ENCODE measurements at regions of chr14 and their contacts with region 1.

Region 1: GRCh38 chr14:69673578-69674305 is 62.3 kb downstream of the SUSD6 start:
- DNase-seq: no peak
- ATAC-seq: peak; percentile 46
- H3K4me3 ChIP-seq: no peak overlapping the region
- H3K27ac ChIP-seq: peak overlapping the region; percentile 77
- H3K4me1 ChIP-seq: peaks cover 72% of the 10 kb centered on the region
- H3K27me3 ChIP-seq: no peaks in the 10 kb centered on the region
- CTCF ChIP-seq: peak in 2 of 3 experiments; percentile 15 to 16; a peak in 2 of 6 replicates
- EP300 ChIP-seq: no peak
- POLR2A ChIP-seq: no peak
- RAD21 ChIP-seq: peak; percentile 25; the same call in 1 of the 2 replicates

Region 2: DNA sequence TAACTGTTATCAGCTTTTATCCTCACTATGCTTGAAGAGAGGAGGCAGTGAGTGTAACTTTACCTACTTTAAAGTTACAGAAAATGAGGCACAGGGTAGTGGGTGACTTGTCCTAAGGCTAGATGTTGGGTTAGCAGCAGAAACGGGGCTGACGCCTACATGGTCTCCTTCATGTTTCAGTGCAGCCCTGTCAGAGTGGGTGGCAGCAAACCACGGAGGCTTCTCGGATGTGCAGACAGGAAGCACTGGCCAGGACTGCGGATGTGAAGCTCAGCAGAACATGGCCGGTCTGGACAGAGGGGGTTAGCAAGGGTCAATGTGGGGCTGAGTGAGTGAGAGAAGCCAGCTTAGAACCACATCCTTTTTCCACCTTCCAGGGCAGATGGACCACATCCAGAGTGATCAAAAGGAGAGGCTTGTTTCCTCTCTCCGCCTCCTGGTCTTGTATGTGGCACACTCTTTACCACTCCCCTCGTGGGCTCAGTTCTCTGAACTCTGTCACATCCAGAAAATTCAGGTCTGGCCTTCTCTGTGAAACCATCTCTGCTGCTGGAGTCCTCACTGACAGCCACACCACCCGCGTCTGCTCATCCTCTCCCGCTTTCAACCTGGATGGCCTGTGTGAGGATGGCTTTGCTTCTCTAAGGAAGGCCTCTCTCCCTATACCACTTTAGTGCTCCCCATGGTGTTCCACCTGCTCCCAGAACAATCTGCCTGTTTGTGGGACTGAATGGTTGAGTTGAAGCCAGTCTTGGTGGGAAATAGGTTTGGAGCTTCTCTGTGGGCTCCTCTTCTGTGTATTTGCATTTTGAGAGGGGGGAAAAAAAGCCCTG is 48.2 kb before region 1 on chr14:
- CTCF ChIA-PET with region 1: interaction called, 10 read pairs
- POLR2A ChIA-PET with region 1: interaction called, 5 read pairs
- RAD21 ChIA-PET with region 1: interaction called, 7 read pairs
- SMC1A ChIA-PET with region 1: interaction called, 30 read pairs
- in situ Hi-C with region 1: no loop called
- intact Hi-C with region 1: no loop called
- DNase-seq: peak; percentile 88
- ATAC-seq: peak; percentile 93
- H3K4me3 ChIP-seq: peak overlapping the region; percentile 65
- H3K27ac ChIP-seq: peak overlapping the region; percentile 82
- H3K4me1 ChIP-seq: peaks cover 61% of the 10 kb centered on the region
- H3K27me3 ChIP-seq: no peaks in the 10 kb centered on the region
- CTCF ChIP-seq: no peak
- EP300 ChIP-seq: peak in 1 of 2 experiments; percentile 67; a peak in 1 of 4 replicates
- POLR2A ChIP-seq: peak; percentile 60; the same call in 1 of the 2 replicates
- RAD21 ChIP-seq: peak; percentile 21; the same call in 1 of the 2 replicates

Region 3: DNA sequence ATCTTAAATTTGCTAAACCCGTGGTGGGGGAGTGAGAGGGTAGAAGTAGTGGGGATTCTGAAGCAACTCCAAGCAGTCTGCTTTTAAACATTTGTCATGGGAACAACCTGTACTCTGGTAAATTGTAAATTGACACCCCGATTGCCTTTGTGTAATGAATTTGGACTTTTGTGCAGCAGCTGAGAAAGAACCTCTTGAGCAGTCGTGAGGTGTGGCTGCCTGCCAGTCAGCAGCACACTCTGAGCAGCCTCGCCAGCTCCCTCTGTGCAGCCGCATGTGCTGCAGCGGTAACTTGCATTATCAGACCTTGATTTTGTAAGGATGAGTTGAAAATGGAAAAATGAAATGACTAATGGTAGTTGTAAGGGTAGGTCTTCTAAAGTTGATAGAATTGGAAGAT is 12.0 kb after region 1 on chr14:
- CTCF ChIA-PET with region 1: interaction called, 4 read pairs
- POLR2A ChIA-PET with region 1: interaction called, 11 read pairs
- RAD21 ChIA-PET with region 1: interaction called, 6 read pairs
- SMC1A ChIA-PET with region 1: interaction called, 10 read pairs
- in situ Hi-C with region 1: no loop called
- intact Hi-C with region 1: no loop called
- DNase-seq: no peak
- ATAC-seq: no peak
- H3K4me3 ChIP-seq: no peak overlapping the region
- H3K27ac ChIP-seq: peak overlapping the region; percentile 61; the same call in 1 of the 2 replicates
- H3K4me1 ChIP-seq: peaks cover 48% of the 10 kb centered on the region
- H3K27me3 ChIP-seq: no peaks in the 10 kb centered on the region
- CTCF ChIP-seq: no peak
- EP300 ChIP-seq: no peak
- POLR2A ChIP-seq: no peak
- RAD21 ChIP-seq: no peak

Region 4: DNA sequence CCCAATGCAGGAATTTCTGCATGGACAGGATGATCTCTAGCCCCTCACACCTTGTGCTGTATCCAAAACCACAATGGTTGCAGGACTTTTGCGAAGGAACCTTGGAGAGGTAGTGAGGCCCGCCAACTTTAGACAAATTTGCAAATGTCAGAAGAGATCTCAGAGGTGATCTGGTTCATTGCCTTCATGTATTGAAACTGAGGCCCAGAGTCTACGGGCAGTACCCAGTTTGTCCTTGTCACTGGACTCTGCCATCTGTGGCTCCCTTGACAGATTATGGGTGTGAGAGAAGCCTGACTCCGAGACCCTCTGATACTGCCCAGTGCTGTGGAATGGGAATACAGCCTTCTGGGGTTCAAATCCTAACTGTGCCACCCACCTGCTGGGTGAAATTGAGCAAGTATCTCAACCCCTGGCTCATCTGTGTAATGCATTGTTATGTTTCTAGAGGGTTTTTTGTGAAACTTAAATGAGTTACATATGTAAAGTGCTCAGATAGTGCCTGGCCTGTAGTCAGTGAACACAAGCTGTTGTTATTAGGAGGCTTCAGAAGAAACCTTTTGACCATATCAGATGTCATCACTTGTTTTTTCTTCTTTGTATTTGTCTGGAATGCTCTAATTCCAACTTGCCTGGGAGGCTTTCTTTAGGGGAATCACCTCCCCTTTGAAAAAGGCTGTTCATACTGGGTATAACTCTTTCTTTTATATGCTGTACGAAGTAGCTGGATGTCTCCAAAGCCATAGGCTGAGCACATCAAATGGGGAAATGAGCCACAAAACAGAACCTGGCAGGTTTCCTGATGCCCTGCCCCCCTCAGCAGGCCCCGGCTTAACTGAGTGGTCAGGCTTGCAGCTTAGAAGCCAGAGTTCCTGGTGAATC is 21.8 kb after region 1 on chr14:
- CTCF ChIA-PET with region 1: interaction called, 3 read pairs
- POLR2A ChIA-PET with region 1: interaction called, 5 read pairs
- RAD21 ChIA-PET with region 1: interaction called, 4 read pairs
- SMC1A ChIA-PET with region 1: interaction called, 9 read pairs
- in situ Hi-C with region 1: no loop called
- intact Hi-C with region 1: loop called (anchors 2 kb)
- DNase-seq: no peak
- ATAC-seq: peak; percentile 45
- H3K4me3 ChIP-seq: peak overlapping the region; percentile 36; the same call in 1 of the 2 replicates
- H3K27ac ChIP-seq: peak overlapping the region; percentile 86
- H3K4me1 ChIP-seq: peaks cover 76% of the 10 kb centered on the region
- H3K27me3 ChIP-seq: no peaks in the 10 kb centered on the region
- CTCF ChIP-seq: no peak
- EP300 ChIP-seq: no peak
- POLR2A ChIP-seq: no peak
- RAD21 ChIP-seq: no peak

Region 5: DNA sequence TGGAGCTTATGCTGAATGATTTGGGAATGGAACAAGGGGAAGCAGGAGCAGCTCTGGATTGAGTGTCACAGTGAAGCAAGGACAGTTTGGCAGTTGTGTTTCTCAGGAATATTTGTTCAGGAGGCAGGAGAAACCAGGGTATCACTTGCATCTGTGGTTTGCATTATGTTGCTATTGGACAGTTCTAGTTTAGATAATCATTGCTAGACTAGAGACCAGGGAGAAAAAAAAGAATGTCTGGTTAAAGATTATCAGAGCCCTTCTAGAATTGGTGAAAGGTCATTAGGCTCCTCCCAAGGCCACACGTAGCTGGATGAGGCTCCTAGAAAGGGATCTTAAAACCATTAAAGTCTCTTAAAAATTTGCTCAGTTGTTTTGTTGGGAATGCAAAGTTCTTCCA is 76.2 kb after region 1 on chr14:
- CTCF ChIA-PET with region 1: no interaction called
- POLR2A ChIA-PET with region 1: no interaction called
- RAD21 ChIA-PET with region 1: no interaction called
- SMC1A ChIA-PET with region 1: no interaction called
- in situ Hi-C with region 1: no loop called
- intact Hi-C with region 1: no loop called
- DNase-seq: peak; percentile 32
- ATAC-seq: peak; percentile 78
- H3K4me3 ChIP-seq: no peak overlapping the region
- H3K27ac ChIP-seq: no peak overlapping the region
- H3K4me1 ChIP-seq: no peaks in the 10 kb centered on the region
- H3K27me3 ChIP-seq: no peaks in the 10 kb centered on the region
- CTCF ChIP-seq: no peak
- EP300 ChIP-seq: no peak
- POLR2A ChIP-seq: no peak
- RAD21 ChIP-seq: no peak

Region 6: DNA sequence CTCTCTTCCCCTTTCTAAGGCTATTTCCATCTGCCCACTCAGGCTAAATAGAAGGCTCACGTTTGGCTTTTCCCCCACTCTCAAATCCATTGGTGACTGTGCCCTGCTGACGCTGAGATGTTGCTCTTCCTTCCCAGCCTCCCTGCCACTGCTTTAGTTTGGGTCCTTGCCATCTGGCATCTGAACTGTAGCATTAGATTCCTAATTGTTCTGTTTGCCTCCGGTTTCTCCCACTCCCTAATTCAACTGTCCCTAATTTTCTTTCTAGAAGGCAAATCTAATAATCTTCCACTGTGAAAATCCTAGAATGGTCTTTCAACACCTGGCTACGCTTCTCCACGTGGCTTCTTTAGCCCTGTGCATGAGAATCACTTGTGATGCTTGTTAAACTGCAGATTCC is 167.9 kb after region 1 on chr14:
- CTCF ChIA-PET with region 1: no interaction called
- POLR2A ChIA-PET with region 1: no interaction called
- RAD21 ChIA-PET with region 1: no interaction called
- SMC1A ChIA-PET with region 1: no interaction called
- in situ Hi-C with region 1: no loop called
- intact Hi-C with region 1: no loop called
- DNase-seq: no peak
- ATAC-seq: no peak
- H3K4me3 ChIP-seq: no peak overlapping the region
- H3K27ac ChIP-seq: no peak overlapping the region
- H3K4me1 ChIP-seq: no peaks in the 10 kb centered on the region
- H3K27me3 ChIP-seq: peaks cover 3 to 5% of the 10 kb centered on the region in 2 experiments; a peak in 3 of 4 replicates
- CTCF ChIP-seq: no peak
- EP300 ChIP-seq: no peak
- POLR2A ChIP-seq: no peak
- RAD21 ChIP-seq: no peak